Gastrocnemius medialis (tissue), 4 donors: ENCODE measurements at regions of chr2 and their contacts with region 1.

Region 1: GRCh38 chr2:219388127-219388844 is 574 bp upstream of the DNPEP start:
- DNase-seq: peak; percentile 96
- ATAC-seq: peak; percentile 68 to 73
- H3K4me3 ChIP-seq: peak overlapping the region; percentile 49 to 87 (median 53)
- H3K27ac ChIP-seq: peak overlapping the region; percentile 91 to 96 (median 93)
- H3K4me1 ChIP-seq: peaks cover 9 to 13% of the 10 kb centered on the region in 2 donors
- H3K27me3 ChIP-seq: no peaks in the 10 kb centered on the region
- CTCF ChIP-seq: peak; percentile 59 to 81 (median 77)
- POLR2A ChIP-seq: no peak

Region 2: DNA sequence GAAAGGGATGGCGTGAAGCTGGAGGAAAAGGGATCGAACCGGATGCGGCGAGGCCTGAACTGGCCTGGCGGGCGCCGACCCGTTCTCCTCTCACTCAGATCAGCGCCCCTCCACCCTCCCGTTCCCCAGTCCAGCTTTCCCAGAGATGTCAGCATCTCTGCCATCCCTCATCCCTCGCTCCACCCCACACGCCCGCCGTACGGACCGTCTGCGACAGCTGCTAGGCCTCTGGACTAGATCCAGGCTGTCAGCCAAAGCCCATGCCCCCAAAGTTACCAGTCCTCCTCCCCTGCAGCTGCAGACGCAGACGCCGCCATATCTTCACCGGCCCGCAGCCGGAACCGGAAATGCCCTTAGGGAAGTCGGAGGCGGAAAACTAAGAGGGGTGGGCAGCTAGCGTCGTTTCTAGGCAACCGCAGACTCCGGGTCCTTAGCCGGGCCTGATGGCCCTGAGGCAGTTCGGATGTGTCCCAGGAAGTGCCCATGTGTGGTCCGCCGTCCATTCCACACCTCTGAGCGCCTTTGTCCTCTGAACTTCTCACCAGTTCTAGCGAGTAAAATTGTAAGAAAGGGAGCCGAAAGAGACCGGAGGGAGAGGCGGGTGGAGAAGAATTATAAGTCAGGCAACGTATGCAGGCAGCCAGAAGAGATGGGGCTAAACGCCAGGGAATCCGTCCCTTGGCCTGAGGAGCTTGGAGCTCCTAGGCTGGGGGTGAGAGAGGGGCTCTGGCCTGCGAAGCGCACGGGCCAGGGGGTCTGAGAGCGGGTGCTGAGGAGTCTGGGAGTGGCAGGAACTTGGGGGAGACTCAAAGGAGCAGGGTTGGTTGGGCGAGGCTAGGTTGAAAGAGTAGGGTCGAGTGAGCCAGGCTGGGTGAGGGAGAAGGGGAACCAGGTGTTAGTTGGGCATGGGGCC is 716.4 kb before region 1 on chr2 and contains the starts of genes RNF25 and STK36:
- in situ Hi-C with region 1: loop called in 1 of 4 experiments (anchors 25 kb)
- intact Hi-C with region 1: no loop called
- DNase-seq: peak; percentile 70 to 75
- ATAC-seq: peak; percentile 97
- H3K4me3 ChIP-seq: peak within 1 kb of the TSS; percentile 76 to 97 (median 89)
- H3K27ac ChIP-seq: peak within 1 kb of the TSS; percentile 73 to 84 (median 82)
- H3K4me1 ChIP-seq: peaks cover 13% of the 10 kb centered on the region in 2 donors
- H3K27me3 ChIP-seq: no peaks in the 10 kb centered on the region
- CTCF ChIP-seq: no peak
- POLR2A ChIP-seq: peak; percentile 50 to 79
- total RNA-seq, gene RNF25: 11.7 to 39.1 (median 26.1) TPM
- total RNA-seq, gene STK36: 3.0 to 16.3 (median 7.6) TPM

Region 3: DNA sequence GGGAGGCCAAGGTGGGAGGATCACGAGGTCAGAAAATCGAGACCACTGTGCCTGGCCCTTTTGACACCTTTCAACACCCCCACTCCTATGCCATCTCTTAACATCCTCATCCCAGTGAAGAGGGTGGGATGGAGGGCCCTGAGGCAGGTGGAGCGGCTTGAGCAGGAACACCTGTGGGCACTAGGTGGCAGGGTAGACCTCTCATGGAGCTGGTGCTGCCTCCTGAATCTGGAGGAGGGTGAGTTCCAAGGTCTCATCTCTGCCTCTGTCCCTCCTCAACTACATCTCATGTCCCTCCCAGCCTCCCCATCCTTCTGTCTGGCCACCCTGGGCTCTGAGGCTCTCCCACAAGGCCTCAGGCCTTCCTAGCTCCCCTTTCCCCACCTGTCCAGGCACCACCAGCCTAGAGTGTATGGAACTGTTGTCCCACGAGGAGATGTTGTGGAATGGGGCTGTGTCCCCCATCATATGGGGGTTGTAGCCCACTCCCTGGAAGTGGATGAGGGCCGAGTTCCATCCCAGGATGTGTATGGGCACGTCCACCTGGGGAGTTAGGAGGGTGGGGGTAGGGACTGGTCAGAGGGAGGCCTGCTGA is 378.0 kb before region 1 on chr2:
- in situ Hi-C with region 1: no loop called
- intact Hi-C with region 1: no loop called
- DNase-seq: no peak
- ATAC-seq: no peak
- H3K4me3 ChIP-seq: no peak overlapping the region
- H3K27ac ChIP-seq: no peak overlapping the region
- H3K4me1 ChIP-seq: no peaks in the 10 kb centered on the region
- H3K27me3 ChIP-seq: peaks cover 9 to 16% (median 15%) of the 10 kb centered on the region in 3 donors
- CTCF ChIP-seq: no peak
- POLR2A ChIP-seq: no peak

Region 4: DNA sequence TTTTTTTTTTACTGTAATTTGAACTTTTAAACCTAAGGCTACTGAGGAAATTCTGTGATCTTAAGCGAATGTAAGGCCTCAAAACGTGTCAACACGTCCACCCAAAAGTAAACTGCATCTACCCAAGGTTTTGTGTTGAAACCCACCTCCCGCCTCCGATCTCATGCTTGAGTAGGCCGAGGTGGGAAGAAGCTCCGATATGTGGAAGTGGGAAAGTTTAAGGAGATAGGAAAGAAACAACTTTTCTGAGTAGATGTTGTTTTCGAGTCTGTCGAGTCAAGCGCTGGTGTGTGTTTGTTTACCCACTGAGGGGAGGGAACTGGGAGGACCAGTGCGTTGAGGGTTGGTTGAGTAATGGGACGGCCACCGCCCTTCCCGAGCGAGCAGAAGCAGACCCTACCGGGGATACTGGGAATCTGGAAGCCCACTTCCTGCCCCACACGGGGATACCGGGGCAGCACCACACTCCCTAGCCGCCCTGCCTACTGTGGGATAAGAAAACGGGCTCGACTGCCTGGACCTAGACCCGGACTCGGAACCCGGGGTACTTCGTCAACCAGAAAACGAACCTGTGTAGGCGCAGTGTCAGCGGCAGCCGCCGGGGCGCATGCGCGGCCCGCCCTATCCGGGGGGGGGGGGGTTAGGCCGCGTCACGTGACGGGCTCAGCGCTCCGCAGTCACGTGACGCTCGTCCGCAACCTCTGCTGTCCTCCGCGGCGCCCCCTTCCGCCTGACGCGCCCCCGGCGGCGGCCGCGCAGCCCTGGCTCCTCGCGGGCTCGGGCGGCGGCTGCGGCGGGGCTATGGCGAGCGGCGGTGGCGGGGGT is 210.5 kb before region 1 on chr2 and contains the start of gene RETREG2:
- in situ Hi-C with region 1: no loop called
- intact Hi-C with region 1: loop called (anchors 5 kb)
- DNase-seq: peak; percentile 86 to 89
- ATAC-seq: peak; percentile 85 to 90
- H3K4me3 ChIP-seq: peak within 1 kb of the TSS; percentile 87 to 96 (median 95)
- H3K27ac ChIP-seq: peak within 1 kb of the TSS; percentile 94 to 99 (median 99)
- H3K4me1 ChIP-seq: peaks cover 17 to 21% of the 10 kb centered on the region in 2 donors
- H3K27me3 ChIP-seq: no peaks in the 10 kb centered on the region
- CTCF ChIP-seq: peak; percentile 25 to 72 (median 66)
- POLR2A ChIP-seq: peak; percentile 96 to 99
- total RNA-seq, gene RETREG2: 39.8 to 57.2 (median 44.9) TPM

Region 5: GRCh38 chr2:219294356-219295351 is 93.6 kb before region 1 on chr2:
- in situ Hi-C with region 1: no loop called
- intact Hi-C with region 1: loop called (anchors 5 kb)
- DNase-seq: peak; percentile 64 to 80
- ATAC-seq: peak; percentile 85 to 86
- H3K4me3 ChIP-seq: peak overlapping the region; percentile 57 to 63 (median 58)
- H3K27ac ChIP-seq: peak overlapping the region; percentile 68 to 82 (median 77)
- H3K4me1 ChIP-seq: peaks cover 8 to 10% of the 10 kb centered on the region in 2 donors
- H3K27me3 ChIP-seq: no peaks in the 10 kb centered on the region
- CTCF ChIP-seq: peak; percentile 95 to 99 (median 98)
- POLR2A ChIP-seq: peak in 1 of 2 donors; percentile 30

Region 6: DNA sequence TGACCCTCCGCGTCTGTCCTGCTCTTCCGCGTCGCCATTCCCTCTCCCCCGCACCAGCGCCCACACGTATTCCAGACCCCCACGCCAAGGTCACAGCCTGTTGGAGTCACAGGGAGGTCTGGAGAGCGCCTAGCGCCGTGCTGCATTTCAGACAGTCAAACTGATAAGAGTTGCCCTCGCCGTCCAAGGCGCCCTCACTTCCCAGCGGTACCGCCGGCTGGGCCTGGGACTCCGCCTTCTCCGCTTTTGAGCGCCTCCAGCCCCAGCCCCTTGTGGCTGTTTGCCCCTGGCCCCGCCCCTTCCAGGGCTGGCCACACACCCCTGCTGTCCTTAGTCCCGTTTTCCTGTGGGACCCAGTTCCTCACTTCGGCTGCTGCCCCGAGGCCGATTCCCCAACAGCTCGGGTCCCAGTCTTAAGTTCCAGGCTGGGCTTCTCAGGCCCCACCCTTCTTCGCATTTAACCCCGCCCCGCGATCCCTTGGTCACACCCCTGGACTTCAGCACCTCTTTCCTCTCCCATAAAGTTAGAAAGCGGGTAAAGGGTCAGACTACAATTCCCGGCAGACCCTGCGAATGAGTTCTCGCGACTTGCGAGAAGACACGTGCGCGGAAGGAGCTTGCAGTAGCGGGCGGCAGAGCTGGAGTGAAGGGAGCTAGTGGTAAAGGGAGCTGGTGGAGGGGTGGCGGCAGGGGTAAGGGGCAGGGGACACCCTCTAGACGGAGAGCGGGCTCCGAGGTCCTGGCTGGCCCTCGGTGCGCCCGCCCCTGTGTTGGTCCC is 110.2 kb after region 1 on chr2 and contains the start of gene GMPPA:
- in situ Hi-C with region 1: no loop called
- intact Hi-C with region 1: loop called (anchors 2 kb)
- DNase-seq: peak; percentile 97 to 98
- ATAC-seq: peak; percentile 82 to 88
- H3K4me3 ChIP-seq: peak within 1 kb of the TSS; percentile 66 to 87 (median 74)
- H3K27ac ChIP-seq: peak within 1 kb of the TSS; percentile 91 to 100 (median 96)
- H3K4me1 ChIP-seq: peaks cover 39 to 46% of the 10 kb centered on the region in 2 donors
- H3K27me3 ChIP-seq: no peaks in the 10 kb centered on the region
- CTCF ChIP-seq: peak in 1 of 5 experiments; percentile 25
- POLR2A ChIP-seq: peak; percentile 83 to 89
- total RNA-seq, gene GMPPA: 18.0 to 25.8 (median 24.4) TPM

Region 7: GRCh38 chr2:219543601-219544358 is 155.5 kb after region 1 on chr2 and contains the starts of genes CHPF and TMEM198:
- in situ Hi-C with region 1: no loop called
- intact Hi-C with region 1: loop called (anchors 5 kb)
- DNase-seq: peak; percentile 96 to 98
- ATAC-seq: peak; percentile 87 to 90
- H3K4me3 ChIP-seq: peak within 1 kb of the TSS; percentile 63 to 79 (median 74)
- H3K27ac ChIP-seq: peak within 1 kb of the TSS; percentile 75 to 96 (median 88)
- H3K4me1 ChIP-seq: peaks cover 18 to 23% of the 10 kb centered on the region in 2 donors
- H3K27me3 ChIP-seq: no peaks in the 10 kb centered on the region
- CTCF ChIP-seq: no peak
- POLR2A ChIP-seq: peak; percentile 71 to 89
- total RNA-seq, gene CHPF: 21.0 to 50.5 (median 37.2) TPM
- total RNA-seq, gene TMEM198: 0.87 to 6.7 (median 3.3) TPM

Region 8: DNA sequence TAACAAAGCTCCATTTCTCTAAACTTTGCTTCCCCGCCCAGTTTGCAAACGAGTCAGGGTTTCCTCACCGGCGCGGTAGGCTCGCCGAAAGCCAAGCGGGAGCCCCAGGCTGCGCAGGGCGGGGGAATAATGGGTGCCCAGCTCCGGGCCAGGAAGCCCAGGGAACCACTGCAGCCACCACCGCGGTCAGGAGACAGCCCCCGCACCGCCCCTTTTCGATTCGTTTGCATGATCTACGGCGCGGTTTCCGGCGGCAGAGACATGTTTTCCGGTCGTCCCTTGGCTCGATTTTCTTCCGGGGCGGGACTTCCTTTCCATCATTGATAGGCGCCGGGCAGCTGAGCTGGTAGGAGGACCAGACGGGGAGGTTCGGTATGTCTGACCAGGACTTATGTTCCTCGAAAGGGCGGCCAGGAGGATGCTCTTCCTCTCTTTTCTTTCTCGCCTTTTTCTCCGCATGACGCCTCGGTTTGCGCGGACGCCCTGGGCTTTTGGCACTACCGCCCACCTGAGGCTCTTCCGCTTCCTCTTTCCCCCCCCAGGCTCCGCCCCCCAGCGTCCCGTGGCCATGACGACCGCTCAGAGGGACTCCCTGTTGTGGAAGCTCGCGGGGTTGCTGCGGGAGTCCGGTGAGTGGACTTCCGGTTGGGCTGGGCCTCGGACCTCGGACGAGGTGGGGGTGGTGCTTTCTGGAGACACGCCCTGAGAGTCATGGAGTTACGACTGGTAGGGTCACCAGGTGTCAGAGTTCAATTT is 209.4 kb after region 1 on chr2 and contains the start of gene STK11IP:
- in situ Hi-C with region 1: no loop called
- intact Hi-C with region 1: loop called (anchors 5 kb)
- DNase-seq: peak; percentile 95 to 97
- ATAC-seq: peak; percentile 95 to 98
- H3K4me3 ChIP-seq: peak within 1 kb of the TSS; percentile 73 to 91 (median 84)
- H3K27ac ChIP-seq: peak within 1 kb of the TSS; percentile 88 to 96 (median 92)
- H3K4me1 ChIP-seq: peaks cover 12 to 16% of the 10 kb centered on the region in 2 donors
- H3K27me3 ChIP-seq: no peaks in the 10 kb centered on the region
- CTCF ChIP-seq: no peak
- POLR2A ChIP-seq: peak; percentile 51
- total RNA-seq, gene STK11IP: 5.4 to 7.5 (median 6.5) TPM